K562 (cell line): ENCODE measurements at regions of chrX and their contacts with region 1.

Region 1: GRCh38 chrX:3651276-3651675 is 62.2 kb downstream of the PRKX start:
- DNase-seq: peak in 1 of 4 experiments; percentile 25
- ATAC-seq: no peak
- H3K4me3 ChIP-seq: no peak overlapping the region
- H3K27ac ChIP-seq: no peak overlapping the region
- H3K4me1 ChIP-seq: no peaks in the 10 kb centered on the region
- H3K27me3 ChIP-seq: no peaks in the 10 kb centered on the region
- CTCF ChIP-seq: peak in 2 of 3 experiments; percentile 38 to 70; a peak in 4 of 6 replicates
- EP300 ChIP-seq: no peak
- POLR2A ChIP-seq: no peak
- RAD21 ChIP-seq: peak; percentile 61

Region 2: GRCh38 chrX:3713225-3713936 is 62.1 kb after region 1 on chrX and contains the start of gene PRKX:
- CTCF ChIA-PET with region 1: no interaction called
- POLR2A ChIA-PET with region 1: no interaction called
- in situ Hi-C with region 1: no loop called
- intact Hi-C with region 1: loop called (anchors 10 kb)
- DNase-seq: peak; percentile 71 to 86 (median 84)
- ATAC-seq: peak; percentile 89
- H3K4me3 ChIP-seq: peak within 1 kb of the TSS; percentile 74
- H3K27ac ChIP-seq: peak within 1 kb of the TSS; percentile 78
- H3K4me1 ChIP-seq: peaks cover 3 to 25% of the 10 kb centered on the region in 2 experiments; a peak in 4 of 5 replicates
- H3K27me3 ChIP-seq: no peaks in the 10 kb centered on the region
- CTCF ChIP-seq: no peak
- EP300 ChIP-seq: no peak
- POLR2A ChIP-seq: 0 out of 2 replicates have a peak, but pooled peaks have one; percentile 45
- RAD21 ChIP-seq: no peak
- polyA plus RNA-seq, gene PRKX: 3.3 to 4.5 TPM